ENCODE measurements at regions of chr3 and their contacts with region 1.

Region 1: DNA sequence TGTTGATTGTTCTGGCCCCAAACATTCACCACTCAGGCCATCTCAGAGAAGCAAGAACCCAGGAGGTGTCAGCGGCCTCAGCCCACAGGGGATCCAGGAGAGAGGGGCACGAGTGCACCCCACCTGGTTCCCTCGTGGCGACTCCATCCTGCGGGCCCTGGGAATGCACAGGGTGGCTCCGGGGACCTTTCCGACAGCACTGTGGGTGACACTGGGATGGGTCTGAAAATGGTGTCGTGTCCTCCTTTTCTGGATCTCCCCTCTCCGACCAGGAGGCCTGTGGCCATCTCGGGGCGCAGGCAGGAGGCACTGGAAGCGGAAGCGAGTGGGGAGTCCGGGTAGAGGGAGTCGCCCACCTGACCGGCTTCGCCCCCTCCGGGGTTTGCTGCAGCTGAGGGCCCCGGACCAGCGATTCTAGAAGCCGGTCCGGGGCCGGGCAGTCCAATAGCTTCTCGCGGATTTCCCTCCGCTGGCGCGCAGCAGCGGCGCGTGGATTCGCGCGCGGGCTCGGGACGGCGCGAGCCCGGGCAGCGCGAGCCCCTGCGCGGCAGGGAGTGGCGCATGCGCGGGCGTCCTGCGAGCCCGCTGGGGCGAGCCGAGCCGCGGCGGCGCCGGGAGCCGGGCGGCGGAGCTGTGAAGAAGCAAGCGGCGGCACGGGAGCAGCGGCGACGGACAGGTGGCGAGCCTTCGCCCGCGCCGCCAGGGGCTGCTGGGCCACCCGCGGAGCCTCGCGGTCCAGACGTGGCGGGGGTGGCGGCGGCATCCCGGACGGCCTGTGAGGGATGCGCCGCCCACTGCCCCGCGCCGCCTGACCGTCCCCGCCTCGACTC is at the start of gene DOCK3:
- DNase-seq: peak in 39 of 42 donors; percentile 27 to 83 (median 65)

Region 2: GRCh38 chr3:50591196-50591741 is 83.3 kb before region 1 on chr3:
- intact Hi-C with region 1: no loop called
- DNase-seq: no peak

Region 3: GRCh38 chr3:51384726-51385473 is 710.3 kb after region 1 on chr3 and contains the start of gene MANF:
- intact Hi-C with region 1: loop called (anchors 10 kb)
- DNase-seq: peak; percentile 94 to 99 (median 98)